Ovary (tissue), 10 donors: ENCODE measurements at regions of chr6 and their contacts with region 1.

Region 1: DNA sequence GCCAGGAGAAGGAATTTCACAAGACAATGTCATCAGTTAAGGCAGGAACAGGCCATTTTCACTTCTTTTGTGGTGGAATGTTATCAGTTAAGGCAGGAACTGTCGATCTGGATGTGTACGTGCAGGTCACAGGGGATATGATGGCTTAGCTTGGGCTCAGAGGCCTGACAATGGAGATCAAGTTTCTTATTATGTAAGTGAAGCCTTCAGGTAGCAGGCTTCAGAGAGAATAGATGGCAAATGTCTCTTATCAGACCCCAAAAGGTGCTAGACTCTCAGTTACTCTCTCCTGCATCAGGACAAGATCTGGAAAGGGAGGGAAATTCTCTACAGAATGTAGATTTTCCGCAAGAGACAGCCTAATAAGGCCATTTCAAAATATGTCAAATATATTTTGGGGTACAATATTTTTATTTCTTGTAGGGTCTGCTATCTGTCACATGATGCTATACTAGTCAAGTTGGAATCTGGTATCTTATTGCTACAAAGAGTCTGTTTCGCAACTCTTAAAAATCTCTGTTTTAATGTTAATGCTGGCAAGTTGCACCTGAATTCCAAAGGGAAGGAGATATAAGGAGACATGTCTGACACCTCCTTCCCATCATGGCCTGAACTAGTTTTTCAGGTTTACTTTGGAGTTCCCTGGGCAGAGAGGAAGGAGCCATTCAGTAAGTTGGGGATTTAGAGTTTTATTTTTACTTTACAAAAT is 48.8 kb downstream of the TRDN start:
- DNase-seq: no peak
- H3K4me3 ChIP-seq: no peak overlapping the region
- H3K27ac ChIP-seq: no peak overlapping the region
- H3K4me1 ChIP-seq: no peaks in the 10 kb centered on the region
- H3K27me3 ChIP-seq: no peaks in the 10 kb centered on the region
- CTCF ChIP-seq: no peak
- EP300 ChIP-seq: no peak
- POLR2A ChIP-seq: no peak

Region 2: GRCh38 chr6:122154912-122155575 is 1432.9 kb before region 1 on chr6:
- intact Hi-C with region 1: loop called in 1 of 4 experiments (anchors 5 kb)
- DNase-seq: peak in 4 of 5 donors; percentile 24 to 38 (median 32)
- H3K4me3 ChIP-seq: no peak overlapping the region
- H3K27ac ChIP-seq: no peak overlapping the region
- H3K4me1 ChIP-seq: peaks cover 3% of the 10 kb centered on the region
- H3K27me3 ChIP-seq: no peaks in the 10 kb centered on the region
- CTCF ChIP-seq: no peak
- EP300 ChIP-seq: no peak
- POLR2A ChIP-seq: no peak

Region 3: DNA sequence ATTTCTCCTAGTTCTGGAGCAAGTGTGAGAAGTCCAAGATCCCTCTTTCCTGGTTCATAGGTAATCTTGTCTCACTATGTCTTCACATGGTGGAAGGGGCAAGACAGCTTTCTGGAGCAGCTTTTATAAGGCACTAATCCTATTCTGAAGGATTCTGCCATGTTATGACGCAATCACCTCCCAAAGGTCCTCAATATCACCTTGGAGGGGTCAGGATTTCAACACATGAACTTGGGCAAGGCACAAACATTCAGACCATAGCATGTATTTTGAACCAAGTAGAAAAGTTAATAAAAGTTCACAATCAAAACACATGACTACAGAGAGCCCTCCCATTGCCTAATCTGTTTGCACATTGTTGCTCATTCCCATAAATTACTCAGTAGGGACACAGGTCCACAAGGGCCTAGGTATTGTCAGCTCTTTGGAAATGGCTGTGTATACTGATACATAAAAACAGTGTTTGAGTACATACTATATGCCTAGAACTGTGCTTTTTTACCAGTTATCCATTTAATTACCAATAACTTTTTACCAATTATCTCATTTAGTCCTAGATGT is 60.1 kb after region 1 on chr6:
- intact Hi-C with region 1: no loop called
- DNase-seq: no peak
- H3K4me3 ChIP-seq: no peak overlapping the region
- H3K27ac ChIP-seq: no peak overlapping the region
- H3K4me1 ChIP-seq: no peaks in the 10 kb centered on the region
- H3K27me3 ChIP-seq: no peaks in the 10 kb centered on the region
- CTCF ChIP-seq: no peak
- EP300 ChIP-seq: no peak
- POLR2A ChIP-seq: no peak